ENCODE measurements at regions of chr16 and their contacts with region 1.

Region 1: DNA sequence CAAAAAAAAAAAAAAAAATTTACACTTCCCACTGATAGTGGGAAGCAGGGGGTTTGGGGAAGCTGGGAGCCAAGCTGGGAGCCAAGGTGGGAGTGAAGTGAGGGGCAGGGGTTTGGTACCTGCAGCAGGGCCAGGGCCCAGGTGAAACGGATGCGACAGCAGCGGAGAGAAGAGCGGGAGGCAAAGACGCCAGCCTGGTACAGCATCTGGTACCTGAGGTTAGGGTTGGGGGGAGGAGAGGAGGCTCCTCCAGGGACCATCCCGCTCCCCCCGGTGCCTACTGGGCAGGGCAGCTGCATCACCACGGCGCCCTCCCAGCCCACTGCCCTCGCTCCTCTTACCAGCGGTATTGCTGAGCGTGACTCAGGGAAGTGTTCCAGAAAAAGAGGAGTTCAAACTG is 9.8 kb upstream of the NPIPB7 start:
- DNase-seq: no peak
- H3K4me3 ChIP-seq: no peak overlapping the region
- H3K27ac ChIP-seq: peak overlapping the region; percentile 90
- H3K4me1 ChIP-seq: peaks cover 5% of the 10 kb centered on the region
- H3K27me3 ChIP-seq: no peaks in the 10 kb centered on the region
- CTCF ChIP-seq: no peak

Region 2: GRCh38 chr16:28219282-28219681 is 262.7 kb before region 1 on chr16:
- intact Hi-C with region 1: no loop called
- DNase-seq: no peak
- H3K4me3 ChIP-seq: no peak overlapping the region
- H3K27ac ChIP-seq: no peak overlapping the region
- H3K4me1 ChIP-seq: no peaks in the 10 kb centered on the region
- H3K27me3 ChIP-seq: no peaks in the 10 kb centered on the region
- CTCF ChIP-seq: no peak

Region 3: GRCh38 chr16:28494121-28494851 is 12.3 kb after region 1 on chr16 and contains the start of gene APOBR:
- intact Hi-C with region 1: no loop called
- DNase-seq: peak; percentile 80
- H3K4me3 ChIP-seq: peak within 1 kb of the TSS; percentile 49
- H3K27ac ChIP-seq: peak within 1 kb of the TSS; percentile 86
- H3K4me1 ChIP-seq: no peaks in the 10 kb centered on the region
- H3K27me3 ChIP-seq: no peaks in the 10 kb centered on the region
- CTCF ChIP-seq: no peak
- total RNA-seq, gene APOBR: 60.8 to 87.4 TPM

Region 4: GRCh38 chr16:28549390-28549789 is 67.4 kb after region 1 on chr16:
- intact Hi-C with region 1: loop called (anchors 10 kb)
- DNase-seq: peak; percentile 34
- H3K4me3 ChIP-seq: no peak overlapping the region
- H3K27ac ChIP-seq: no peak overlapping the region
- H3K4me1 ChIP-seq: peaks cover under 1% of the 10 kb centered on the region
- H3K27me3 ChIP-seq: no peaks in the 10 kb centered on the region
- CTCF ChIP-seq: peak; percentile 40

Region 5: GRCh38 chr16:29645694-29646187 is 1163.8 kb after region 1 on chr16:
- intact Hi-C with region 1: no loop called
- DNase-seq: no peak
- H3K4me3 ChIP-seq: no peak overlapping the region
- H3K27ac ChIP-seq: no peak overlapping the region
- H3K4me1 ChIP-seq: no peaks in the 10 kb centered on the region
- H3K27me3 ChIP-seq: no peaks in the 10 kb centered on the region
- CTCF ChIP-seq: no peak